ENCODE measurements at regions of chr21 and their contacts with region 1.

Region 1: DNA sequence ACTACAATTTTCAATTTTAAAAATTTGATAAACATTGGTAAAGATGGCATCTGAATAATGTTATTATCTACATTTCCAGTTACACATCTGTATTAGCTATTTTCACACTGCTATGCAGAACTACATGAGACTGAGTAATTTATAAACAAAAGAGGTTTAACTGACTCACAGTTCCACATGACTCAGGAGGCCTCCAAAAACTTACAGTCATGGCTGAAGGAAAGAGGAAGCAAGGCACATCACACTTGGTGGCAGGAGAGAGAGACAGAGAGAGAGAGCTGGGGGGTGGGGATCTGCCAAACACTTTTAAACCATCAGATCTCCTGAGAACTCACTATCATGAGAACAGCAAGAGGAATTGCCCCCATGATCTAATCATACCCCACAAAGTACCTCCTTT is 850.0 kb downstream of the LTN1 start:
- H3K4me3 Mint-ChIP-seq: no peak overlapping the region
- H3K27ac Mint-ChIP-seq: peak overlapping the region; percentile 54
- H3K4me1 Mint-ChIP-seq: peaks cover 14% of the 10 kb centered on the region
- H3K27me3 Mint-ChIP-seq: no peaks in the 10 kb centered on the region

Region 2: GRCh38 chr21:28229814-28230213 is 87.1 kb after region 1 on chr21:
- intact Hi-C with region 1: loop called (anchors 2 kb)
- H3K4me3 Mint-ChIP-seq: no peak overlapping the region
- H3K27ac Mint-ChIP-seq: no peak overlapping the region
- H3K4me1 Mint-ChIP-seq: peaks cover 43% of the 10 kb centered on the region
- H3K27me3 Mint-ChIP-seq: no peaks in the 10 kb centered on the region